Left cardiac atrium (tissue), 4 donors: ENCODE measurements at regions of chr3 and their contacts with region 1.

Region 1: DNA sequence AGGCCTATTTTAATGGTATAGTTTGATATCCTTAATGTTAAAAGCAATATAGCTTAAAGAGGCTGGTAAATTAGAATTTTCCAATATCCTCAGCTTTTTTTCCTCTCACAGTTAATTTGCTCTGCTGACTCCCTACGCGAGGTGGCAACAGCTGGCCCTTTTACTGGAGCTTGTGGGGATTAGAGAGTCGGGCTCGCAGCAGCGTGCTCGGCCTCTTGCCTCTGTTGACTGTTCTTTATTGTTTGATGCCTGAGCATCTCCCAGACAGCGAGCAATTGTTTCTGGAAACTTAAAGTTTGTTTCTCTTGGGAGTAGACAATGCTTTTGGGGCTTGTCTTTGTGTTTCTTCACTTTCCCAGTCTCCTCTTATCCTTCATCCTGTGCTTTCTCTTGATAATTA is 80.8 kb downstream of the OPA1 start:
- DNase-seq: no peak
- ATAC-seq: no peak

Region 2: DNA sequence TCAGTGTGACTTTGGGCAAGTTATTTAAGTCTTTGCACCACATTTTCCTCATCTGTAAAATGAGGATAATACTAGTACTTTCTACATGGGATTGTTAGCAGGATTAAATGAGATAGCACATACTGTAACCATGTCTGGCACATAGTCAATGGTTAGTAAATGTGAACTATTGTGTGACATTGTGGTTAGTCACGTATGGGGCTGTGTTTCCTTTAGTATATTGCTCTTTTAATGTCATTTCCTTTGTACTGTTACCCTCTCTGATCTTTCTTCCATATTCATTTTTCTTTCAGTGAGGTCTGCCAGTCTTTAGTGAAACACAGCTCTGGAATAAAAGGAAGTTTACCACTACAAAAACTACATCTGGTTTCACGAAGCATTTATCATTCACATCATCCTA is 59.4 kb before region 1 on chr3:
- intact Hi-C with region 1: no loop called
- DNase-seq: no peak
- ATAC-seq: no peak

Region 3: GRCh38 chr3:193702967-193703366 is 29.1 kb after region 1 on chr3:
- intact Hi-C with region 1: no loop called
- DNase-seq: no peak
- ATAC-seq: no peak

Region 4: DNA sequence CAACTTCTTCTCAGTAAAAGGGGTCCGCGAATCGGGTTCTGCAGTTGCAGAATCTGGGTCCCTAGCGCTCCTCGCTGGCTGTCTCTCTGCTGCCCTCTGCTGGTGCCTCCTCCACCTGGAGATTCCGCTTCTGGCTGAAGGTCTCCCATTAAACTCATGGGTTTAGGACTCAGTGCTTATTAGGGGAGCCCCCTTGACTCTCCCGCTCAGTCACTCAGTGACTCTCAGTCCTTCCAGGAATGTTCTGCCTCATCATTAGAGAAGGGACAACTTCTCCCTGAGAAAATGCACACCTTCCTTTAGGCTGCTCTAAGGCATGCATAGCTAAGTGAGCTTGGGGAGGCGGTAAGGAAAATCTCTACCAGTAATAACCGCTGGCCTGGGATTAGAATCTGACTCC is 670.2 kb after region 1 on chr3:
- intact Hi-C with region 1: loop called in 1 of 2 experiments (anchors 10 kb)
- DNase-seq: peak; percentile 77
- ATAC-seq: peak; percentile 63 to 65